Breast epithelium (tissue), 4 donors: ENCODE measurements at regions of chr12 and their contacts with region 1.

Region 1: DNA sequence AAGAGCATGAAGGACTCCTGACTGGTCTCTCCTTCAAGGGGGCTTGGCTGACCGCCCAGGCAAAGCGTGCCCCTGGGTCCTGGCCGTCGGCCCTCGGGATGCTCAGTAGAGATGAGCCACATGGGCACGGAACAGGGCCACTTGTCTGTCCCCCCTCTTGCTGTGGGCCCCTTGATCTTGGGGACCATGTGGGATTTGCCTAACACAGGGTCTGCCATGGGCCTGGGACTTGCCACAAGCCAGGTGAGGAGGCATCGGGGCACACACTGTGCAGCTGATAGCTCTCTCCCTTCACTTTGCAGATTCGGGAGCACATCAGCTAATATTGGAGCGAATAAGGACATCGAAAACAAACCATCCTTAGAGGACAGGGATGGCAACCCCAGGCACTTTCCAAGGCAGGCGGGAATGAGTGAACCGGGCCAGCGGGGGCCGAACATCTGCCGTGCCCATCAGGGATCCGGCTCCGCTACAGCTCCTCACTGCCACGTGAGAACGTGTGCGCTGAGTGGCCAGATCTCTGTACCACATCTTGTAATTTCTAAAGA is 88.1 kb downstream of the PIWIL1 start:
- DNase-seq: peak in 1 of 2 donors; percentile 45
- H3K4me3 ChIP-seq: no peak overlapping the region
- H3K27ac ChIP-seq: no peak overlapping the region
- H3K4me1 ChIP-seq: no peaks in the 10 kb centered on the region
- H3K27me3 ChIP-seq: no peaks in the 10 kb centered on the region
- CTCF ChIP-seq: no peak
- POLR2A ChIP-seq: no peak

Region 2: GRCh38 chr12:130455161-130455560 is 29.4 kb after region 1 on chr12:
- intact Hi-C with region 1: loop called (anchors 1 kb)
- DNase-seq: no peak
- H3K4me3 ChIP-seq: no peak overlapping the region
- H3K27ac ChIP-seq: no peak overlapping the region
- H3K4me1 ChIP-seq: no peaks in the 10 kb centered on the region
- H3K27me3 ChIP-seq: no peaks in the 10 kb centered on the region
- CTCF ChIP-seq: no peak
- POLR2A ChIP-seq: no peak